CD8-positive, alpha-beta T cell (primary cell): ENCODE measurements at regions of chr9 and their contacts with region 1.

Region 1: DNA sequence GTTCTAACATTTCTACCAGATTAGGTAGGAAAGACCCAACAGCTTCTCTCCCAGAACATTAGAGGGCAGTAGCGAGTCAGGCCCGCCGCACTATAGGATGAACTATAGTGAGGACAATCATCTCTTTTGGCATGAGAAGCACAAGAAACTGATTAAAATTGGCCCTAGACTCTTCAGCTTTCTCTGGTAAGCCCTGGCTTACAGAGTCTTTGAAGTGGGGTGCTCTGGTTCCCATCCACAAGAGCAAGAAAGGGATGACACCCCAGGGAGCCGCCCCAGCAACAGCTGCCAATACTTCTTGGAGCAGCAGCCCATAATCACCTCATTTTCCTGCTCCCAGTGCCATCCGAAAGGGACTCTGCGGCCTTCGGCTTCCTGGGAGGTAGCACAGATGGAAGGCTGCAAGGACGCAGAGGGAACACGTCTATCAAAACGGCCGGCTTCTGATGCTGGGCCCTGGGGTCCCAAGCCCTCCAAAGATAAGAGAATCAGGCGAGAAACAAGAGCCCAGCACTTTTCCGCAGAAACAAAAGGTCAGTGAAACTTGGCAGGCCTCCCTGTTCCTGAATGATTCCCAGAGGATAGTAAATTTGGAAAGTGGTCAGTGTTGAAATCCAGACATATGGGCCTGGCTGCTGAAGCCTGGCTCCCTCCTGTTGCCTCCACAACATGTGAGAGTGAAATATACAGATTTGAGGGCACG is 69.3 kb downstream of the HSD17B3 start:
- DNase-seq: peak in 5 of 9 experiments; percentile 20 to 57 (median 32)
- ATAC-seq: peak; percentile 49
- H3K4me3 ChIP-seq: no peak overlapping the region
- H3K4me3 Mint-ChIP-seq: no peak overlapping the region
- H3K27ac ChIP-seq: no peak overlapping the region
- H3K27ac Mint-ChIP-seq: no peak overlapping the region
- H3K4me1 ChIP-seq: no peaks in the 10 kb centered on the region
- H3K4me1 Mint-ChIP-seq: no peaks in the 10 kb centered on the region
- H3K27me3 ChIP-seq: peaks cover 0 to 6% of the 10 kb centered on the region in 2 experiments
- H3K27me3 Mint-ChIP-seq: peaks cover 44% of the 10 kb centered on the region
- CTCF ChIP-seq: peak; percentile 77

Region 2: GRCh38 chr9:96245399-96245798 is 12.7 kb after region 1 on chr9:
- CTCF ChIA-PET with region 1: interaction called, 13 read pairs
- POLR2A ChIA-PET with region 1: no interaction called
- intact Hi-C with region 1: no loop called
- DNase-seq: no peak
- ATAC-seq: no peak
- H3K4me3 ChIP-seq: no peak overlapping the region
- H3K4me3 Mint-ChIP-seq: no peak overlapping the region
- H3K27ac ChIP-seq: no peak overlapping the region
- H3K27ac Mint-ChIP-seq: no peak overlapping the region
- H3K4me1 ChIP-seq: peaks cover 11% of the 10 kb centered on the region
- H3K4me1 Mint-ChIP-seq: peaks cover 12% of the 10 kb centered on the region
- H3K27me3 ChIP-seq: peaks cover 0 to 10% of the 10 kb centered on the region in 2 experiments
- H3K27me3 Mint-ChIP-seq: peaks cover 33% of the 10 kb centered on the region
- CTCF ChIP-seq: peak; percentile 20

Region 3: GRCh38 chr9:96317335-96317980 is 84.8 kb after region 1 on chr9:
- CTCF ChIA-PET with region 1: interaction called, 13 read pairs
- POLR2A ChIA-PET with region 1: no interaction called
- intact Hi-C with region 1: loop called (anchors 1 kb)
- DNase-seq: peak in 7 of 9 experiments; percentile 13 to 73 (median 61)
- ATAC-seq: no peak
- H3K4me3 ChIP-seq: no peak overlapping the region
- H3K4me3 Mint-ChIP-seq: no peak overlapping the region
- H3K27ac ChIP-seq: no peak overlapping the region
- H3K27ac Mint-ChIP-seq: no peak overlapping the region
- H3K4me1 ChIP-seq: no peaks in the 10 kb centered on the region
- H3K4me1 Mint-ChIP-seq: no peaks in the 10 kb centered on the region
- H3K27me3 ChIP-seq: no peaks in the 10 kb centered on the region
- H3K27me3 Mint-ChIP-seq: no peaks in the 10 kb centered on the region
- CTCF ChIP-seq: peak; percentile 80

Region 4: DNA sequence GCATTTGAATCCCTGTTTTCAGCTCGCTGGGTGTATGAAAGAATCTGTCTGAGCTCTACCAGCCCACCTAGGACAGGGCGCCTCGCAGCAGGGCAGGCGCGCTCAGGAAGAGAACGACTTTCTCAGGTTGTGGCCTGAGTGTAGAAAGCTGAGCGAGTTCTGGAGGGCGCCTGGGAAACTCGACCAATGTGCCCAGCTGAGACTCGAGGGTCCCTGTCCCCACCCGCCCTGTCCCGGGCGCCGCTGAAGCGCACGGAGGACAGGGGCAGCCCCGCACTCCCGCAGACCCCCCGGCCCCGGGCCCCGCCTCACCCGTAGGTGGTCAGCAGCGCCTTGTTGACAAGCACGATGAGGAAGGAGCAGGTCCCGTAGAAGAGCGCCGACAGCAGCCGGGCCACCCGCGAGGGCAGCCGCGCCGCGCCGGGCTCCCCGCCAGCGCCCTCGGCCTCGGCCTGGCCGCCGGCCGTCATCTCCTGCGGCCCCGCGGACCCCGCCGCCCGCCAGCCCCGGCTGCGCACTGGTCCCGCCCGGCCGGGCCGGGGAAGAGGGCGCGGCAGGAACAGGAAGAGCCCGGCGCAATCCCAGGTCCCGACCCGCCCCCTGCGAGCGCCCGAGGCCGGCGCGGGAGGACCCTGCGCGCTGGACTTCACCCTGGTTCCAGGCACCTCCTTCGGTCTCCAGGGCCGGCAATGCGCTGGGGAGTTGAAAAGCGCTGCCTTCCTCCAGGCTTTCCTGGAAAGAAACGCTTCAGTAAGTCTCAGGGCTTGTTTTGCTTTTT is 150.7 kb after region 1 on chr9 and contains the start of gene SLC35D2:
- CTCF ChIA-PET with region 1: no interaction called
- POLR2A ChIA-PET with region 1: no interaction called
- intact Hi-C with region 1: no loop called
- DNase-seq: peak in 7 of 9 experiments; percentile 1 to 62 (median 15)
- ATAC-seq: peak; percentile 63
- H3K4me3 ChIP-seq: peak within 1 kb of the TSS; percentile 54 to 60
- H3K4me3 Mint-ChIP-seq: peak within 1 kb of the TSS; percentile 90
- H3K27ac ChIP-seq: peak within 1 kb of the TSS in 1 of 2 experiments; percentile 43
- H3K27ac Mint-ChIP-seq: peak within 1 kb of the TSS; percentile 85
- H3K4me1 ChIP-seq: peaks cover 18% of the 10 kb centered on the region
- H3K4me1 Mint-ChIP-seq: peaks cover 36% of the 10 kb centered on the region
- H3K27me3 ChIP-seq: no peaks in the 10 kb centered on the region
- H3K27me3 Mint-ChIP-seq: no peaks in the 10 kb centered on the region
- CTCF ChIP-seq: no peak
- total RNA-seq, gene SLC35D2: 18.5 to 20.5 TPM

Region 5: DNA sequence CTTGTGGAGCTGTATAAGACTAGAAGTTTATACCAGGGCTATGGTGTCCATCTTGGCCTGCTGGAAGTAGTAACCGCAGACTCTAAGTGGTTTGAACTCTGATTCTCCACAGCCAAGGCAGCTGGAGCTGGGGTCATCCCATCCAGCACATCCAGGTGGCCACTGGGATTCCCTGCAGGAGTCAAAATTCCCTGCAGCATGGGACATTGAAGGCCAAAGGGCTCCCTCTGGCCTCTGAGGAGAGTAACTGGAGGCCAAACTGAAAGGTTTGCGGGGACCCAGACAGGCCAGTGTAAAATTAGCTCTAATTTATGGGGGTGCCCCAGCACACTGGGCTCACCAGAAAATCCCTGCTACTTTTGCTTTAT is 434.7 kb after region 1 on chr9:
- CTCF ChIA-PET with region 1: no interaction called
- POLR2A ChIA-PET with region 1: no interaction called
- intact Hi-C with region 1: loop called in 1 of 2 experiments (anchors 5 kb)
- DNase-seq: no peak
- ATAC-seq: no peak
- H3K4me3 ChIP-seq: no peak overlapping the region
- H3K4me3 Mint-ChIP-seq: no peak overlapping the region
- H3K27ac ChIP-seq: no peak overlapping the region
- H3K27ac Mint-ChIP-seq: no peak overlapping the region
- H3K4me1 ChIP-seq: no peaks in the 10 kb centered on the region
- H3K4me1 Mint-ChIP-seq: no peaks in the 10 kb centered on the region
- H3K27me3 ChIP-seq: no peaks in the 10 kb centered on the region
- H3K27me3 Mint-ChIP-seq: peaks cover 23% of the 10 kb centered on the region
- CTCF ChIP-seq: no peak